GM12878 (cell line): ENCODE measurements at regions of chr6 and their contacts with region 1.

Region 1: GRCh38 chr6:25490018-25490801 is 161.8 kb upstream of the SCGN start:
- DNase-seq: peak; percentile 42
- ATAC-seq: peak; percentile 99
- H3K4me3 ChIP-seq: no peak overlapping the region
- H3K27ac ChIP-seq: no peak overlapping the region; the same call in 1 of the 2 replicates
- H3K4me1 ChIP-seq: no peaks in the 10 kb centered on the region
- H3K27me3 ChIP-seq: no peaks in the 10 kb centered on the region
- CTCF ChIP-seq: peak; percentile 84 to 89 (median 88)
- EP300 ChIP-seq: no peak
- POLR2A ChIP-seq: no peak
- RAD21 ChIP-seq: peak; percentile 97

Region 2: DNA sequence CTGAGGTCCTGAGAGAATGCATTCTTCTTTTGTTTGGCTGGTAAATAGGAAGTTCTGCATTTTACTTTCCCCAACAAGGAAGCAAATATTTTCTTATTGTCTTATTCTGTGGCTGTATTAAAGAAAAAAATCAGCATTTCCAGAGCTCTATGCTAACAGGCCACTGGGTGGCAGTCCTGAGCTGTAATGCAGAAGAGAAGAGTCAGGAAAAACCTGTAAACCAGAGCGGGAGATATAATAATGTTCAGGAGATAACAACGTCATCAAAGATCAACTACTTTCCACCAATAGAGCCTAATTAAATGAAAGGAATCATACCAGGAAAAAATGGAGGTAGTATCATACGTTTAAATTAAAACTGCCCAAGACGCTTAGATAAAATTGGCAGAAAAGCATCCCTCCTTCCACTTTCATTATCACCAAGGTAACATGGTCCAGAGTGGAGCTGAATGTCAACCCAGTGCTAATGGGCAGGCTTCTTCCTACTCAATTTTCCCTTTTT is 266.7 kb before region 1 on chr6:
- CTCF ChIA-PET with region 1: interaction called, 25 read pairs
- POLR2A ChIA-PET with region 1: no interaction called
- RAD21 ChIA-PET with region 1: interaction called, 17 read pairs
- SMC1A ChIA-PET with region 1: interaction called, 11 read pairs
- in situ Hi-C with region 1: no loop called
- intact Hi-C with region 1: loop called (anchors 5 kb)
- DNase-seq: peak; percentile 19
- ATAC-seq: peak; percentile 81
- H3K4me3 ChIP-seq: no peak overlapping the region; the same call in 1 of the 2 replicates
- H3K27ac ChIP-seq: no peak overlapping the region
- H3K4me1 ChIP-seq: no peaks in the 10 kb centered on the region
- H3K27me3 ChIP-seq: no peaks in the 10 kb centered on the region; a peak in 1 of 4 replicates
- CTCF ChIP-seq: peak; percentile 82 to 90 (median 84)
- EP300 ChIP-seq: 0 out of 4 replicates have a peak, but pooled peaks of 1 of the 2 experiments have one; percentile 11
- POLR2A ChIP-seq: no peak
- RAD21 ChIP-seq: peak; percentile 91

Region 3: GRCh38 chr6:25270559-25270958 is 219.7 kb before region 1 on chr6:
- CTCF ChIA-PET with region 1: interaction called, 362 read pairs
- POLR2A ChIA-PET with region 1: interaction called, 15 read pairs
- RAD21 ChIA-PET with region 1: interaction called, 219 read pairs
- SMC1A ChIA-PET with region 1: interaction called, 191 read pairs
- in situ Hi-C with region 1: loop called (anchors 5 kb)
- intact Hi-C with region 1: loop called (anchors 1 kb)
- DNase-seq: no peak
- ATAC-seq: no peak
- H3K4me3 ChIP-seq: no peak overlapping the region
- H3K27ac ChIP-seq: no peak overlapping the region
- H3K4me1 ChIP-seq: no peaks in the 10 kb centered on the region
- H3K27me3 ChIP-seq: no peaks in the 10 kb centered on the region; a peak in 1 of 4 replicates
- CTCF ChIP-seq: no peak
- EP300 ChIP-seq: no peak
- POLR2A ChIP-seq: no peak
- RAD21 ChIP-seq: no peak

Region 4: GRCh38 chr6:25330796-25331685 is 159.2 kb before region 1 on chr6:
- CTCF ChIA-PET with region 1: interaction called, 8 read pairs
- POLR2A ChIA-PET with region 1: no interaction called
- RAD21 ChIA-PET with region 1: interaction called, 12 read pairs
- SMC1A ChIA-PET with region 1: interaction called, 21 read pairs
- in situ Hi-C with region 1: no loop called
- intact Hi-C with region 1: no loop called
- DNase-seq: no peak
- ATAC-seq: no peak
- H3K4me3 ChIP-seq: no peak overlapping the region
- H3K27ac ChIP-seq: no peak overlapping the region
- H3K4me1 ChIP-seq: peaks cover 7% of the 10 kb centered on the region
- H3K27me3 ChIP-seq: no peaks in the 10 kb centered on the region
- CTCF ChIP-seq: no peak
- EP300 ChIP-seq: no peak
- POLR2A ChIP-seq: no peak
- RAD21 ChIP-seq: no peak

Region 5: GRCh38 chr6:25389471-25389870 is 100.7 kb before region 1 on chr6:
- CTCF ChIA-PET with region 1: interaction called, 10 read pairs
- POLR2A ChIA-PET with region 1: no interaction called
- RAD21 ChIA-PET with region 1: no interaction called
- SMC1A ChIA-PET with region 1: interaction called, 4 read pairs
- in situ Hi-C with region 1: no loop called
- intact Hi-C with region 1: no loop called
- DNase-seq: no peak
- ATAC-seq: peak; percentile 19; the same call in 1 of the 3 replicates
- H3K4me3 ChIP-seq: no peak overlapping the region
- H3K27ac ChIP-seq: no peak overlapping the region
- H3K4me1 ChIP-seq: peaks cover 11% of the 10 kb centered on the region
- H3K27me3 ChIP-seq: no peaks in the 10 kb centered on the region
- CTCF ChIP-seq: no peak
- EP300 ChIP-seq: no peak
- POLR2A ChIP-seq: no peak
- RAD21 ChIP-seq: no peak

Region 6: DNA sequence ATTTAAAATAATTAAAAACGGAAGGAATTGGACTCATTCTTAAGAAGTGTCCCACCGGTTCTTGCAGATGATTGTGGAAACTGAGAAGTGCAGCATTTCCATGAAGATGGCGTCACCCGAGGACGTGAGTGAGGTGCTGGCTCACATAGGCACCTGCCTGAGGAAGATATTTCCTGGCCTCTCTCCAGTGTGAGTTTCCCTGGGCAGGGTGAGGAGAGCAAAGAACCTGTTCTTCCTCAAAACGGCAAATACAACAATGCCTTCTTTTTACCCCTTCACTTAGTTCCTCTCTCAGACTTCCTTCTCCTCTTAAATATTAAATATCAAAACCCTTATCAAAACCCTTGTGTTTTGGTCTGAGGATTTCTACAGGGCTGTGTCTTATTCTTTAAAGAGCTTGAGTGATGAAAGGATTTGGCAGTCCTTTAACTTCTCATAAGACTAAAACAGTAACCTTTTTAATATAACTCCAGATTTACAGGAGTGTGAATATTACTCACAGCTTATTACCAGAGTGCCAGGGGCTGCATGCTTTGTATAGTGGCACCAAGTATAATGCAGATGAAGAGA is 54.7 kb before region 1 on chr6:
- CTCF ChIA-PET with region 1: interaction called, 10 read pairs
- POLR2A ChIA-PET with region 1: no interaction called
- RAD21 ChIA-PET with region 1: no interaction called
- SMC1A ChIA-PET with region 1: interaction called, 3 read pairs
- in situ Hi-C with region 1: no loop called
- intact Hi-C with region 1: no loop called
- DNase-seq: no peak
- ATAC-seq: no peak
- H3K4me3 ChIP-seq: no peak overlapping the region
- H3K27ac ChIP-seq: no peak overlapping the region
- H3K4me1 ChIP-seq: no peaks in the 10 kb centered on the region
- H3K27me3 ChIP-seq: no peaks in the 10 kb centered on the region
- CTCF ChIP-seq: no peak
- EP300 ChIP-seq: no peak
- POLR2A ChIP-seq: no peak
- RAD21 ChIP-seq: no peak

Region 7: GRCh38 chr6:25511376-25511775 is 21.2 kb after region 1 on chr6:
- CTCF ChIA-PET with region 1: interaction called, 31 read pairs
- POLR2A ChIA-PET with region 1: no interaction called
- RAD21 ChIA-PET with region 1: interaction called, 5 read pairs
- SMC1A ChIA-PET with region 1: interaction called, 9 read pairs
- in situ Hi-C with region 1: no loop called
- intact Hi-C with region 1: no loop called
- DNase-seq: no peak
- ATAC-seq: no peak
- H3K4me3 ChIP-seq: no peak overlapping the region
- H3K27ac ChIP-seq: no peak overlapping the region
- H3K4me1 ChIP-seq: no peaks in the 10 kb centered on the region
- H3K27me3 ChIP-seq: no peaks in the 10 kb centered on the region
- CTCF ChIP-seq: no peak
- EP300 ChIP-seq: no peak
- POLR2A ChIP-seq: no peak
- RAD21 ChIP-seq: no peak